Activated CD4-positive, alpha-beta memory T cell treated with anti-CD3 and anti-CD28 coated beads, Interleukin-2, amount 10 ng/mL, durations not matched to agents 7 days and 5 days (primary cell): ENCODE measurements at regions of chr1 and their contacts with region 1.

Region 1: GRCh38 chr1:185420588-185421081 is 103.6 kb upstream of the IVNS1ABP start:
- DNase-seq: peak; percentile 60
- H3K4me3 Mint-ChIP-seq: peak overlapping the region; percentile 35
- H3K27ac Mint-ChIP-seq: peak overlapping the region; percentile 91
- H3K4me1 Mint-ChIP-seq: peaks cover 40% of the 10 kb centered on the region
- H3K27me3 Mint-ChIP-seq: no peaks in the 10 kb centered on the region

Region 2: DNA sequence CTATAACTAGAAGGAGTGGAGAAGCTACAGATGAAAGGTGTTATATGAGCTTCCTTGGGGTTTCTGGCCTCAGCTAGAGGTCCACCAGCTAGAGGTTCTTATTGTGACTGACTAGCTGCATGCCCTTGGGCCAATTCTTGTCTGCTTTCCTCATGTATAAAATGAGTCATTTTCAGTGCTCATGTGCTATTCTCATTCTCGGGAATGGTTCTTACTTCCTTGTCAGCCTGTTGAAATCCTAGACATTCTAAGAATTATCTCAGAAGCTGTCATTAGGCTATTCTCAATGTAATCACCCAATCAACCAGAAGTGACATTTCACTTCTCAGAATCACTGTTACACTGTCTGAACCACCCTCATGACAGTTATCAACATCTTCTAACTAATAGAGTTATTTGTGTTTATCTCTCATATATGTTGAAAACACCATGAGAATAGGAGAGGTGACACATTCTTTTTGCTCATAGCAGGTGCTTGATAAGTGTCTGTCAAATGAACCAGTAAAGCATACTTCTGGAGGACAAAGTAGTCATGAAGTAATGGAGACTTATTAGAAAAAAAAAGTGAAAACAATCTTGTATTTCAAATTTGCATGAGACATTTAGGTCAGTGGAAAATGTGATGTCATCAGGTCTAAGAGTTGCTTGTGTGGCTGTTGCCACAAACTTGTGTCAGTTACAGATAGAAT is 19.2 kb after region 1 on chr1:
- CTCF ChIA-PET with region 1: no interaction called
- POLR2A ChIA-PET with region 1: interaction called, 30 read pairs
- DNase-seq: peak; percentile 56
- H3K4me3 Mint-ChIP-seq: no peak overlapping the region
- H3K27ac Mint-ChIP-seq: no peak overlapping the region
- H3K4me1 Mint-ChIP-seq: peaks cover 13% of the 10 kb centered on the region
- H3K27me3 Mint-ChIP-seq: no peaks in the 10 kb centered on the region